AG04449 (cell line): ENCODE measurements at regions of chr17 and their contacts with region 1.

Region 1: GRCh38 chr17:32877164-32877764 is 340 bp upstream of the MYO1D start:
- DNase-seq: no peak
- H3K4me3 ChIP-seq: peak overlapping the region; percentile 63
- CTCF ChIP-seq: peak; percentile 79

Region 2: GRCh38 chr17:32777436-32777835 is 99.8 kb before region 1 on chr17:
- CTCF ChIA-PET with region 1: interaction called, 81 read pairs
- POLR2A ChIA-PET with region 1: no interaction called
- DNase-seq: no peak
- H3K4me3 ChIP-seq: no peak overlapping the region
- CTCF ChIP-seq: no peak

Region 3: DNA sequence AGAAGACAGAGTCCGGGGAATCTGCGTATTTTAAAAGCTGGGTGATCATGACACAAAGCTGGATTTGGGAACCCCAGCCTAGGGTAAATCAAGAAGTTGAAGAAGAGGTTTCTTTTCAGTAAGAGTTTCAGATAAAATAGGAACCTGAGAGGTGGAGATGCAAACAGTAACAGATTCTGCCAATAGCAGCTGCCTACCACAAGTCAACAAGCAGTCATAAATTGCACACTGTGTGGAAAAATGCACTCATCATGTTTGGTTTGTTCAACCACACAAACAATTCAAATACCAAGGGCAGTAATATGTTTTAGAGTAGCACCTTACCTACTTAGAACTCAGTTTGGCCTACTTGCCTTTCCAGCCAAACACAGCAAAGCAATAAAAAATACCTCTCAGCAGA is 14.3 kb before region 1 on chr17:
- CTCF ChIA-PET with region 1: interaction called, 26 read pairs
- POLR2A ChIA-PET with region 1: no interaction called
- DNase-seq: no peak
- H3K4me3 ChIP-seq: no peak overlapping the region
- CTCF ChIP-seq: no peak

Region 4: DNA sequence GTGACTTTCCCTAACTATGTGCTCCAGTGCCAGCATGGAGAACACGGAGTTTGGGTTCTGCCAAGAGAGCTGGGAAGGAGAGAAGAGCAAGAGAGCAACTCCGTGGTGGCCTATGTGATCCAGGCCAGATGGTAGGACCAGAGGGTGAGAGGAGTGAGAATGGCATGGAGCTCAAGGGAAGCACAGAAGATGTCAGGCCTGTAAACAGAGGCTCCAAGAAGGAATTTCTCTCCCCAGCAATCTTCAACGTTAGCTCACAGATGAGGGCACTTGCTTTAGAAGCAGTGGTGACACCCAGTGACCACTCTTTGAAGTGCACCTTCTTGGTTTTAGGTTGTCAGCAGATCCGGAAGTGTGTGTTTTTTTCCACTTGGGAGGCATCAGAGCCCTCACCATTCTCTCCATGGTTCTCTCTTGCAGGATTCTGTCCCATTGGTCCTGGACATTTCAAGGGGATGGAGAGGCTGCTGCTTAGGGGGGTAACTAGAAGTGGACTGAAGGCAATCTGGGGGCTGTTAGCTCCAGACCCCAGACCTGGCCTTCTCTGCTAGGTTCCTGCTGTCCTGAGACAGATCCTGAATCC is 32.6 kb after region 1 on chr17:
- CTCF ChIA-PET with region 1: interaction called, 27 read pairs
- POLR2A ChIA-PET with region 1: no interaction called
- DNase-seq: peak; percentile 49
- H3K4me3 ChIP-seq: no peak overlapping the region
- CTCF ChIP-seq: peak; percentile 78

Region 5: DNA sequence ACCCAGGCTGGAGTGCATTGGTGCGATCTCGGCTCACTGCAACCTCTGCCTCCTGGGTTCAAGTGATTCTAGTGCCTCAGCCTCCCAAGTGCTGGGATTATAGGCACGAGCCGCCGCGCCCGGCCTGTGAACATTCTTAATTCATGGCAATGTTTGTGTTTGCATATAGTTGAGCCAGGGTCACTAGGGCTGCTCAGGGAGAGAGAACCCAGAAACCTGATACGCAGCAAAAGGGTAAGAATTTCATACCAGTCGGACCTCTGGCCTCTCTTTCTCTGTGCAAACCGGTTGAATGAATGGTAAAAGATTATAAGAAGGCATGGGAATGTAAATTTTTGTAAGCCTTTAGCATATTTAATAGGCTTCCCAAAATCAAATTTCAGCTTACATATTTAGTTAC is 43.8 kb after region 1 on chr17:
- CTCF ChIA-PET with region 1: interaction called, 22 read pairs
- POLR2A ChIA-PET with region 1: no interaction called
- DNase-seq: no peak
- H3K4me3 ChIP-seq: no peak overlapping the region
- CTCF ChIP-seq: no peak